Ovary (tissue), 10 donors: ENCODE measurements at regions of chr15 and their contacts with region 1.

Region 1: GRCh38 chr15:77496710-77497103 is 76.0 kb downstream of the HMG20A start:
- DNase-seq: peak; percentile 88 to 91 (median 89)
- H3K4me3 ChIP-seq: no peak overlapping the region
- H3K27ac ChIP-seq: peak overlapping the region in 1 of 2 donors; percentile 77
- H3K4me1 ChIP-seq: peaks cover 11% of the 10 kb centered on the region
- H3K27me3 ChIP-seq: no peaks in the 10 kb centered on the region
- CTCF ChIP-seq: peak; percentile 87 to 94 (median 90)
- EP300 ChIP-seq: no peak
- POLR2A ChIP-seq: no peak

Region 2: GRCh38 chr15:77107531-77108355 is 389.0 kb before region 1 on chr15:
- intact Hi-C with region 1: loop called in 2 of 4 experiments (anchors 2 to 10 kb)
- DNase-seq: peak; percentile 52 to 69 (median 62)
- H3K4me3 ChIP-seq: no peak overlapping the region
- H3K27ac ChIP-seq: no peak overlapping the region
- H3K4me1 ChIP-seq: peaks cover 6% of the 10 kb centered on the region
- H3K27me3 ChIP-seq: no peaks in the 10 kb centered on the region
- CTCF ChIP-seq: peak; percentile 34 to 74 (median 36)
- EP300 ChIP-seq: no peak
- POLR2A ChIP-seq: no peak

Region 3: GRCh38 chr15:77118882-77119321 is 377.8 kb before region 1 on chr15:
- intact Hi-C with region 1: loop called in 1 of 4 experiments (anchors 10 kb)
- DNase-seq: peak in 2 of 5 donors; percentile 20 to 57
- H3K4me3 ChIP-seq: no peak overlapping the region
- H3K27ac ChIP-seq: no peak overlapping the region
- H3K4me1 ChIP-seq: no peaks in the 10 kb centered on the region
- H3K27me3 ChIP-seq: no peaks in the 10 kb centered on the region
- CTCF ChIP-seq: peak; percentile 52 to 71 (median 53)
- EP300 ChIP-seq: no peak
- POLR2A ChIP-seq: no peak

Region 4: GRCh38 chr15:77533578-77534430 is 37.1 kb after region 1 on chr15:
- intact Hi-C with region 1: no loop called
- DNase-seq: peak in 2 of 5 donors; percentile 10 to 14
- H3K4me3 ChIP-seq: no peak overlapping the region
- H3K27ac ChIP-seq: no peak overlapping the region
- H3K4me1 ChIP-seq: peaks cover 5% of the 10 kb centered on the region
- H3K27me3 ChIP-seq: no peaks in the 10 kb centered on the region
- CTCF ChIP-seq: no peak
- EP300 ChIP-seq: no peak
- POLR2A ChIP-seq: no peak

Region 5: DNA sequence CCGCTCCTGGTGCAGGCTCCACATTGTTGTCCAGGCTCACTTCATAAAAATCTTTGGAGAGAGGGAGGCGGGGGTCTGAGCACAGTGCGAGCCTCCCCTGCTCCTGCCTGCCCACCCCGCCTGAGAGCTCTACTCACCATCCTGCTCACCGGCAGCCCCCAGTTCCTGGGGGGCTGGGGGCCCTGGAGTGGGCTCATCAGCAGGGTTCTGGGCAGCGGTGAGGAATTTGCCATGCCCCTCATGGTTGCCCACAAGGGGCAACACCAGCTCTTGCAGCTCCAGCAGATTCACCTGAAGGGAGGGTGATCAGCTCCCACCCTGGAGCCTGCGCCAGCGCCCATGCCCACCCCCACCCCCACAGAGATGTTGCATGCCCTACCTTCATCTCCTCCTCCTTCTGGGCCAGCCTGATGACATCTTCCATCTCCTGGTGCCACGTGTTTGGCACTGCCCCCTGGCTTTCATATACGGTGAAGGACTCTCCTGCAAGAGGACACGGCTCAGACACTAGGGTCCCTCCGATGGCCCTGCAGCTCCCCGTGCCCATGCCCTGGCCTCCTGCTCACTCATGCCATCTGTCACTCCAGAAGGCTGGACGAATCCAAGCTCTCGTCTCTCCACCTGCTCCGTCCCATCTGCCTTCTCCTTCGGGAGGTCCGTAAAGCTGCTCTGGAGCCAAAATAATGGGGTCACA is 418.7 kb after region 1 on chr15:
- intact Hi-C with region 1: no loop called
- DNase-seq: peak in 1 of 5 donors; percentile 19
- H3K4me3 ChIP-seq: no peak overlapping the region
- H3K27ac ChIP-seq: no peak overlapping the region
- H3K4me1 ChIP-seq: no peaks in the 10 kb centered on the region
- H3K27me3 ChIP-seq: no peaks in the 10 kb centered on the region
- CTCF ChIP-seq: no peak
- EP300 ChIP-seq: no peak
- POLR2A ChIP-seq: no peak

Region 6: GRCh38 chr15:78216708-78217107 is 720.0 kb after region 1 on chr15:
- intact Hi-C with region 1: loop called in 1 of 4 experiments (anchors 5 kb)
- DNase-seq: no peak
- H3K4me3 ChIP-seq: no peak overlapping the region
- H3K27ac ChIP-seq: no peak overlapping the region
- H3K4me1 ChIP-seq: peaks cover 4% of the 10 kb centered on the region
- H3K27me3 ChIP-seq: no peaks in the 10 kb centered on the region
- CTCF ChIP-seq: no peak
- EP300 ChIP-seq: no peak
- POLR2A ChIP-seq: no peak